Aorta (tissue), 5 donors: ENCODE measurements at regions of chr12 and their contacts with region 1.

Region 1: DNA sequence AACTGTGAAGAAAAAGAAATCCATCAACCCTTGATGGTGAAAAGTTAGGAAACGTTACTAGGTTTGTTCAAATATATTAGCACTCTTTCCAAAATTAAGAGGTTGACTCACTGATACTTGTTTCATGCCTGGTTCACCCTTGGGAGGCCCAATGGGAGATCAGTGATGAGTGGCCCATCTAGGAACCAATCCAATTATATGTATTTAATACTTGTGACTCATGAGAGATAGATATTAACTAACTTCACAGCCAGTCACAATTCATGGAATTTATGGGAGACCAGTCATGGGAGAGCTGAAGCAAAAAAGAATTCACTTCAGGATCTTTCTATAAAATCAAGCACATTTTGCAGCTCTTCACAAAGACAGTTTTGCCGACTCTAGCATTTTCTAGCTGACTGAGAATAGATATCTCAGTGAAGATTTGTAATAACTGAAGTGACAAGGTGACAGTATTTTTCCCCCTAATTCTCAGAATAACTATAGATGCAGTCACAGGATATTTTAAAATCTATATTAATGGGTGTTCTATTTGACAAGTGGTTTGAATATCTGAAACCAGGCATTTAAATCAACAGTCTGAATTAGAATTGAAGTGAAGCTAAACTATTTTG is 230.2 kb downstream of the EPS8 start:
- DNase-seq: no peak
- ATAC-seq: no peak
- H3K4me3 ChIP-seq: no peak overlapping the region
- H3K27ac ChIP-seq: no peak overlapping the region
- H3K4me1 ChIP-seq: peaks cover 3 to 6% of the 10 kb centered on the region in 2 donors
- H3K27me3 ChIP-seq: no peaks in the 10 kb centered on the region

Region 2: DNA sequence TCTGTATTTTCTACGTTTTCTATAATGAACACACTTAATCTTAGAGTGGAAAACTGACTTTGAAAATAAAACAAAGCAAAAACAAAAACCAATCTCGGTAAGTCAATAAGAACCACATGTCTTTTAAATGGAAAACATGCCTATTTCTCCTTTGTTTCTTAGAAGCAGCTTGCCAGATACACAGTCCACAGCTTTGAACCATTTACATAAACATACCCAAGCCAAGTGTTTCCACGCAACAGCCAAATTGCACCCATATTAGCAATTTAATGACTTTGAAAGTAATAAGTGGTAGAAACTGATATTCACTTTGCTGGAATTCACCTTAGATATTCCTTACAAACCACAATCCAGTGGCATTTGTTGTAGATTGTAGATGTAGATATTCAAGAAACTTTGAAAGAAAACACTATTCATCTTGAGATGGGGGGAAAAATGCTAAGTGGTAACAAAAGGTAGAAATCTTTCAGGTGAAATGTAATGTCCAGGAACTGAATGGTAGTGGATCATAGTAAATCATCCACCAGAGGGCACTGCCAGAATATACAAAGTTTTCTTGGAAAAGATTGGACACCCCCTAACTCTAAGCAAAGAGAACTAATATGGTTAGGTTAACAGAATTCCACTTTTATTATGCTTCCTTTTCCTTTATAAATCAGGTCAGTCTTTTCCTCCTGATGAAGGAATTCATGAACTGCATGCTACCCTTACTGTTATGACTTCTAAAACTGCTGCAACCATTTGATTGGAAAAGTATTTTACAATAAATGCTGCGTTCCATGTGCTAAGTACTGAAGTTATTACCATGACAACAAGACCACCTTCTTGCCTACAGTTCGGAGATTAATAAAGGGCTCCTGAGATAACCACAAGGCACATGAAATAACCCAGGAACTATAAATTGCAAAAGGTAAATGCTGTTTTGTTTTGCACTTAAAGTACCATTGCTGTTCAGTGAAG is 407.6 kb before region 1 on chr12:
- intact Hi-C with region 1: loop called in 1 of 2 experiments (anchors 10 kb)
- DNase-seq: no peak
- ATAC-seq: peak; percentile 83
- H3K4me3 ChIP-seq: no peak overlapping the region
- H3K27ac ChIP-seq: peak overlapping the region in 1 of 2 donors; percentile 96
- H3K4me1 ChIP-seq: peaks cover 7 to 9% of the 10 kb centered on the region in 2 donors
- H3K27me3 ChIP-seq: no peaks in the 10 kb centered on the region